ENCODE measurements at regions of chr20 and their contacts with region 1.

Region 1: DNA sequence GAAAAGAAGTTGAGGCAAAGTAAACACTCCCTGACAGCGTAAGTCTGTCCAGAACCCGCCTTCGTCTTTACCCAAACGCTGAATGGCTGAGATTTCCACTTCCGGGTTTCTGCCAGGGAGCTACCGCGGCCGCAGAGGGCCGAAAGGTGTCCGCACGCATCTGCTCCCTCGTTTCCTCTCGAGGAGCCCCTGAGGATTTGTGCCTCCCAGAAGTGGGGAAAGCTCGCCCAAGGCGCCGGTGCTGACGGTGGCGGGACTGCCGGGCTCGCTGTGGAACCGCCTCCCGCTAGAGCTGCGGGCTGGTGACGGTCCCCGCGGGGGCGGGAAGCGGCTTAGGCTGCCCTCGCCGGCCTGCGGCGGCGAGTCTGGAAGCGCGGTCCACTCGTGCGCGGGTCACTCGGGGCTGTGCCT is 1760.2 kb upstream of the DEFB115 start:
- DNase-seq: peak in 3 of 5 donors; percentile 28 to 65 (median 40)
- ATAC-seq: peak in 3 of 4 donors; percentile 31 to 64 (median 58)
- H3K4me3 ChIP-seq: peak overlapping the region in 5 of 12 donors; percentile 17 to 57 (median 43)
- H3K27ac ChIP-seq: peak overlapping the region in 2 of 12 donors; percentile 30 to 34
- H3K4me1 ChIP-seq: no peaks in the 10 kb centered on the region
- H3K27me3 ChIP-seq: peaks cover 0 to 4% (median 0%) of the 10 kb centered on the region in 9 donors
- CTCF ChIP-seq: no peak
- POLR2A ChIP-seq: no peak

Region 2: DNA sequence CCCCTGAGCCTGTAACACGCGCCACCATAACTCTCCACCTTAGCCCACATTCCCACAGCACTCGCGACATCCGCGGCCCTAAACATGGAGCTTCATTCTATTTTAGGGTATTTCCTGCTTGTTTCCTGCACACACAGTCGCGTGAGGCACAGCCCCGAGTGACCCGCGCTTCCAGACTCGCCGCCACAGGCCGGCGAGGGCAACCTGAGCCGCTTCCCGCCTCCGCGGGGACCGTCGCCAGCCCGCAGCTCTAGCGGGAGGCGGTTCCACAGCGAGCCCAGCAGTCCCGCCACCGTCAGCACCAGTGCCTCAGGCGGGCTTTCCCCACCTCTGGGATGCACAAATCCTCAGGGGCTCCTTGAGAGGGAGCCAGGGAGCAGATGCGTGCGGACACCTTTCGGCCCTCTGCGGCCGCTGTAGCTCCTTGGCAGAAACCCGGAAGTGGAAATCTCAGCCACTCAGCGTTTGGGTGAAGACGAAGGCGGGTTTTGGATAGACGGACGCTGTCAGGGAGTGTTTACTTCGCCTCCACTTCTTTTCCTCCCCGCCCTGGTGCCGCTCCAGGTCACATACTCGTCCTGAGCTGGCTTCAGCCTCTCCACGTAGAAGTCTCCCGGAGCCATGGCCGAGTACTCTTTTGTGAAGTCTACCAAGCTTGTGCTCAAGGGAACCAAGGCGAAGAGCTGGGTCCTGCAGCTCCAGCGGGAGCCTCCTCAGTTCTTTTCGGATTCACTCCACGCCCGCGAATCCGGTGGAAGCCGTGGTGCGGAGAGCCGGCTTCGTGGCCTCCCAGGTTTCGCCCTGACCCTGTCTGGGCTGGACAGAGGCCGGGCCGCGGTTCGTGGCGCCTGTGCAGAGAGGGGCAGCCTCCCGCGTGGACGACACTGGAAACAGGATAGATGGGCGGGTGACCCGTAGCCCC is 417.2 kb before region 1 on chr20:
- intact Hi-C with region 1: loop called in 1 of 10 experiments (anchors 5 kb)
- DNase-seq: peak in 4 of 5 donors; percentile 29 to 55 (median 33)
- ATAC-seq: peak in 3 of 4 donors; percentile 33 to 84 (median 58)
- H3K4me3 ChIP-seq: peak overlapping the region in 9 of 12 donors; percentile 19 to 61 (median 39)
- H3K27ac ChIP-seq: peak overlapping the region in 2 of 12 donors; percentile 31 to 51
- H3K4me1 ChIP-seq: no peaks in the 10 kb centered on the region
- H3K27me3 ChIP-seq: no peaks in the 10 kb centered on the region
- CTCF ChIP-seq: no peak
- POLR2A ChIP-seq: no peak

Measured in heart left ventricle (tissue), 16 donors.